PC-9 (cell line): ENCODE measurements at regions of chr2 and their contacts with region 1.

Region 1: GRCh38 chr2:181790716-181791649 is 100.5 kb upstream of the ITPRID2 start:
- DNase-seq: peak; percentile 60 to 100
- H3K4me3 ChIP-seq: peak overlapping the region; percentile 5; the same call in 1 of the 2 replicates
- H3K27ac ChIP-seq: peak overlapping the region; percentile 94
- H3K4me1 ChIP-seq: peaks cover 57% of the 10 kb centered on the region
- H3K27me3 ChIP-seq: no peaks in the 10 kb centered on the region
- CTCF ChIP-seq: no peak

Region 2: GRCh38 chr2:181130686-181131085 is 660.3 kb before region 1 on chr2:
- CTCF ChIA-PET with region 1: no interaction called
- POLR2A ChIA-PET with region 1: interaction called, 12 read pairs
- intact Hi-C with region 1: no loop called
- DNase-seq: no peak
- H3K4me3 ChIP-seq: no peak overlapping the region
- H3K27ac ChIP-seq: no peak overlapping the region
- H3K4me1 ChIP-seq: no peaks in the 10 kb centered on the region
- H3K27me3 ChIP-seq: no peaks in the 10 kb centered on the region
- CTCF ChIP-seq: no peak

Region 3: GRCh38 chr2:181742922-181743722 is 47.9 kb before region 1 on chr2:
- CTCF ChIA-PET with region 1: interaction called, 5 read pairs
- POLR2A ChIA-PET with region 1: no interaction called
- intact Hi-C with region 1: loop called (anchors 1 kb)
- DNase-seq: peak; percentile 50 to 59
- H3K4me3 ChIP-seq: no peak overlapping the region
- H3K27ac ChIP-seq: no peak overlapping the region
- H3K4me1 ChIP-seq: peaks cover 14% of the 10 kb centered on the region
- H3K27me3 ChIP-seq: no peaks in the 10 kb centered on the region
- CTCF ChIP-seq: peak; percentile 95

Region 4: DNA sequence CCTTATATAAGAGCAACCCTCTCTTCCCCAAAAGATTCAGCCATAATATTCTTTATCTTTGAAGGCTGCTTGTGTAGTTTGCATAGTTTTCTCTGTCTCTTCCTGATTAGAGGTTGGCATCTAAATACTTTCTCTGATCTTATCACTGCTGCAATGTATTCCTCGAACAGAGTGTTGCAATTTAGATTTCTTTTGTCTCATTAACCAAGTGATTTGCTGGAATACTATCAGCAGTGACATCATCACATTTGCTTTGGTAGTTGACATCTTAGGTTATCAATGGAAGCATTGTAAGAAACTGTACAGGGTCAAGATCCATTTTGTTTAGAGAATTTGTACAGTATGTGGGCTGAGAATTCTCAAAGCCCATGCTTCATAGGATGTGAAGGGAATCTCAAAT is 38.7 kb before region 1 on chr2:
- CTCF ChIA-PET with region 1: no interaction called
- POLR2A ChIA-PET with region 1: no interaction called
- intact Hi-C with region 1: loop called (anchors 2 kb)
- DNase-seq: peak in 1 of 2 experiments; percentile 88
- H3K4me3 ChIP-seq: no peak overlapping the region
- H3K27ac ChIP-seq: no peak overlapping the region; the same call in 1 of the 2 replicates
- H3K4me1 ChIP-seq: peaks cover 11% of the 10 kb centered on the region
- H3K27me3 ChIP-seq: no peaks in the 10 kb centered on the region
- CTCF ChIP-seq: no peak

Region 5: GRCh38 chr2:181810823-181811695 is 20.1 kb after region 1 on chr2:
- CTCF ChIA-PET with region 1: no interaction called
- POLR2A ChIA-PET with region 1: interaction called, 3 read pairs
- intact Hi-C with region 1: loop called (anchors 1 kb)
- DNase-seq: peak; percentile 81 to 98
- H3K4me3 ChIP-seq: no peak overlapping the region
- H3K27ac ChIP-seq: peak overlapping the region; percentile 74
- H3K4me1 ChIP-seq: peaks cover 32% of the 10 kb centered on the region
- H3K27me3 ChIP-seq: no peaks in the 10 kb centered on the region
- CTCF ChIP-seq: no peak

Region 6: DNA sequence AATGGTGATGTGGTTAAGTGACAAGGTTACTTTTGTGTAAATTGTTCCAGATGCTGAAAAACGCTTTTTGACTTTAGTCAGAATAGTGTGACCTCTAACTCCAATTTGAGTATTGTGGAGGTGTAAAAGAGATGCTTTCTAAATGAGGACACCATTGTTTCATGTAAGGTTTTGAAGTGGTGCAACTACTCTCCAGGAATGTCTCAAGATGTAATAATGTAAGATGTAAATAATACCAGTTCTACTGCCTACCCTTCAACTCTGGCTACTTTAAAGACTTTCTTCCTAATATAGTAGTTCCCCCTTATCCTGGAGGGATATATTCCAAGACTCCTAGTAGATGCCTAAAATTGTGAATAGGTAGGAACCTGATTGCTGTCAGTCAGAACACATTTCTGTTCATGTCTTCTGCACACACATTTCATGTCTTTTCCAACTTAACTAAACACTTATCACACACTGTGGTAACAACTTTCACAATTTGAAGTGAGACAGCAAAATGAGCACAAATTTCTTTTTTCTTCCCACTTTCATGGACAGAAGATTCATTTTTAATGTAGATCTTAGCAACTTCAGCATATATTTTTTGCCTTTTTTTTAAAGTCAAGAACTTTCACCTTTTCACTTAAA is 155.6 kb after region 1 on chr2:
- CTCF ChIA-PET with region 1: no interaction called
- POLR2A ChIA-PET with region 1: no interaction called
- intact Hi-C with region 1: loop called (anchors 1 kb)
- DNase-seq: peak in 1 of 2 experiments; percentile 70
- H3K4me3 ChIP-seq: 0 out of 2 replicates have a peak overlapping the region, but pooled peaks have one; percentile 2
- H3K27ac ChIP-seq: peak overlapping the region; percentile 48
- H3K4me1 ChIP-seq: peaks cover 45% of the 10 kb centered on the region
- H3K27me3 ChIP-seq: no peaks in the 10 kb centered on the region
- CTCF ChIP-seq: no peak

Region 7: DNA sequence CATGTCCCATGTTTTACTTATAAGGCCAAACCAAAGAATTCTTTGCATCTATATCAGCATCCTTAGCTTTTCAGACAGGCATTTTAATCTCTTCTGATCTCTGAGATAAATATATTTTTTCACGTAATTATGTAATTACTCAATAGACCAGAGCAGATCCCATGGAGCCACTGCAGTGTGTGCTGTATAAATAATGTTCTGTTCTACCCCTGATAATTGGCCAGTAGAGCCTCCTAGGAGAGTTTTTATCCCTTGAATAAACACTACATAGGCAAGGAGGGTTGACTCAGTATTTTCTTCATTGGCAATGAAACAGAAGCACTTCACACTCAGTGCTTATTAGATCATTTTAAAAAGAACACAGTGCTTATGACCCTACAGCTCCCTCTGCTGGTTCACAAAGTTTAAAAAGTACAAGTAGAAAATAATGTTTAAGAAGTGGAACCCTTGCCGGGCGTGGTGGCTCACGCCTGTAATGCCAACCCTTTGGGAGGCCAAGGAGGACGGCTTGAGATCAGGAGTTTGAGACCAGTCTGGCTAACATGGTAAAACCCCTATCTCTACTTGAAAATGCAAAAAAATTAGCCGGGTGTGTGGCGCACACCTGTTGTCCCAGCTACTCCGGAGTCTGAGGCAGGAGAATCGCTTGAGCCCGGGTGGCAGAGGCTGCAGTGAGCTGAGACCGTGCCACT is 286.6 kb after region 1 on chr2:
- CTCF ChIA-PET with region 1: no interaction called
- POLR2A ChIA-PET with region 1: no interaction called
- intact Hi-C with region 1: loop called (anchors 2 kb)
- DNase-seq: peak; percentile 47 to 76
- H3K4me3 ChIP-seq: no peak overlapping the region
- H3K27ac ChIP-seq: no peak overlapping the region
- H3K4me1 ChIP-seq: 0 out of 2 replicates have a peak, but pooled peaks cover 4% of the 10 kb centered on the region
- H3K27me3 ChIP-seq: no peaks in the 10 kb centered on the region
- CTCF ChIP-seq: peak; percentile 98